ENCODE measurements at regions of chr3 and their contacts with region 1.

Region 1: DNA sequence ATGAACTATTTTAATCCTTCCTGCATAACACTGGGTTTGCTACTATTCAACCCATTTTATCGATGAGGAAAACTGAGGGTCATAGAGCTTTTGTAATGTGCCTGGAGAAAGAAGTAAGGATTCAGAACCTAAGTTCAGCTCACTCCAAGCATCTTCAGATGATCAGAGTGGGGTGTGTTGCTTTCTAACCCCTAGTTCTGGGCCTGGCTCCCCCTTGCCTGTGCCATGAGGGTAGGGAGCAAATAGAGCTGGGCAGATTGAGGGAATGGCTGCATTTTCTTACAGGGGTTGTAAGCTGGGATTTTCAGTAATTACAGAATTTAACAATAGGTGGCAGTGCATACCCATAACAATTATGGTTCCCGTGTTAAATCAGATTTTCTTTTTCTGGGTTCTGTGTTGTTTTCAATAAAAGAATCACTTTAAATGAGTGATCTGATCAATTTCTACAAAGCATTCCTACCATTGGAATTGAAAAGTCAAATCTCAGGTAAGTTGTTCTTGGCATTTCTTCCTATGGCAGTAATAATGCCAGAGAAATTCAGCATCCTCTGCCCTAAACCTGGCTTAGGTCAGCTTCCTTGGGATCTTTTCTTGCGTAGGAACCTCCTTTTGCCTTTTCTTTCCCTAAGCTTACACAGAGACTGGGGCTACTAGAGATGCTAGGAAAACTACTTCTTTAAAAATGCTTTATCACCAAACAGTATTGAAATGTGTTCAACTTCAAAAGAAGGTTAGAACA is 103.8 kb upstream of the IL12A start:
- DNase-seq: peak in 1 of 4 donors; percentile 41
- ATAC-seq: peak; percentile 53
- H3K4me3 ChIP-seq: no peak overlapping the region
- H3K27ac ChIP-seq: no peak overlapping the region
- H3K4me1 ChIP-seq: peaks cover 0 to 14% of the 10 kb centered on the region in 2 donors
- H3K27me3 ChIP-seq: no peaks in the 10 kb centered on the region
- CTCF ChIP-seq: peak; percentile 43 to 45

Region 2: DNA sequence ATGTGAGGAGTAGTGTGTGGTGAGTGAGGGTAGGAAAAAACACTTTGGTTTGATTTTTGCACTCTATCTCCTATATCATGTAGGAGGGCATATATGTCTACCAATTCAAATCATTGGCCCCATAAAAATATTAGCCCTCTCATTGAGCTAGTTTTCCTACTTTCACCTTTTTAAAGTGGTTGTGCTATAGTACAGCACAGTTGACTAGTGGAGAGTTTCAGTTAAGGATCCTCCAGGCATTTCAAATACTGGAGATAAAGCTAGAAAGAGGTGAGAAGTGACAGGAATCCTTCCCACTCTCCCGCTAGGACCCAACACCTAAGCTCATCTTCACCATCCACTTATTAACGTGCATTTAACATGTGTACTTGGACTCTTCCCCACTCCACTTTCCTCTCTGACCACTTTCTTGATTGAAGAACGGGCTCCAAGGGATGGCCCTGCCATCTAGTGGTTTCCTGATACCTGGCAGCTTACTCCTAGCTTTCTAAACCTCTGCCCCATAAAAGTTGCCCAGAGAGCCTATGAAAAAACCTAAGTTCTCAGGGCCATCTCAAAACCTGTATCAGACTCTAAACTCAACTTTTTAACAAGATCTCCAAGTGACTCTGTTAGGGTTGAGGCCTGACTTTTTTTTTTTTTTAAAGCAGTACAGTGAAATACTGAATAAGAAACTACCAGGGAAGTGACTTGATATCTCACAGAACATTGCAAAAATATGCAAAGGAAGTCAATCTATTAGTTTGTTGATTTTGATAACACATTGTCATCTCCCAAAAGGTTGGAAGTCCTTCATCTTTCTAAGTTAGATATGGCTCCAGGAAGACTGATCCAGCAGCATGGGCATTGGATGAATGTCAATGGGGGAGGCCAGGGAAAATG is 121.7 kb after region 1 on chr3:
- intact Hi-C with region 1: loop called in 1 of 2 experiments (anchors 5 kb)
- DNase-seq: peak in 2 of 4 donors; percentile 29 to 66
- ATAC-seq: peak; percentile 95
- H3K4me3 ChIP-seq: no peak overlapping the region
- H3K27ac ChIP-seq: no peak overlapping the region
- H3K4me1 ChIP-seq: peaks cover 0 to 5% of the 10 kb centered on the region in 2 donors
- H3K27me3 ChIP-seq: no peaks in the 10 kb centered on the region
- CTCF ChIP-seq: peak; percentile 64 to 72

Region 3: DNA sequence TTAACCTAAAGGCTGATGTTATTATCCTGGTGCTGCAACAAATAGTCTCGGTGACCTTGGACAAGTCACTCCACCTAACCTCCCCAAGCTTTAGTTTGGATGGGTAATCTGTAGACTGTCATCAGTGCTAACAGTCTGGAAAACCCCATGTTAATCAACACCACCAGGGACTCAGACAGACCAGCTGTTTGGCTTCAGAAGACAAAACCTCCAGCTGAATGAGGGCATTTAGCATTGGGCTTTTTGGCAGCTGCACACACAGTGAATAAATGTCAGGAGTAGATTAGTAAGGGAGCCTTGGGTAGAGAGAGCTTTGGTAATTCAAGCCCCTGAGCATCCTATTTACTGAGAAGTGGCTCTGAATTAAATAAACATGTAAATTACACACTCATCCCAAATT is 315.5 kb after region 1 on chr3:
- intact Hi-C with region 1: no loop called
- DNase-seq: no peak
- ATAC-seq: no peak
- H3K4me3 ChIP-seq: no peak overlapping the region
- H3K27ac ChIP-seq: no peak overlapping the region
- H3K4me1 ChIP-seq: no peaks in the 10 kb centered on the region
- H3K27me3 ChIP-seq: no peaks in the 10 kb centered on the region
- CTCF ChIP-seq: no peak